Mammary epithelial cell (primary cell): ENCODE measurements at regions of chr17 and their contacts with region 1.

Region 1: GRCh38 chr17:5364156-5364555 is 55.3 kb downstream of the NUP88 start:
- DNase-seq: peak; percentile 48
- H3K4me3 ChIP-seq: no peak overlapping the region
- H3K27ac ChIP-seq: no peak overlapping the region
- H3K4me1 ChIP-seq: peaks cover 25% of the 10 kb centered on the region
- H3K27me3 ChIP-seq: no peaks in the 10 kb centered on the region
- CTCF ChIP-seq: no peak

Region 2: DNA sequence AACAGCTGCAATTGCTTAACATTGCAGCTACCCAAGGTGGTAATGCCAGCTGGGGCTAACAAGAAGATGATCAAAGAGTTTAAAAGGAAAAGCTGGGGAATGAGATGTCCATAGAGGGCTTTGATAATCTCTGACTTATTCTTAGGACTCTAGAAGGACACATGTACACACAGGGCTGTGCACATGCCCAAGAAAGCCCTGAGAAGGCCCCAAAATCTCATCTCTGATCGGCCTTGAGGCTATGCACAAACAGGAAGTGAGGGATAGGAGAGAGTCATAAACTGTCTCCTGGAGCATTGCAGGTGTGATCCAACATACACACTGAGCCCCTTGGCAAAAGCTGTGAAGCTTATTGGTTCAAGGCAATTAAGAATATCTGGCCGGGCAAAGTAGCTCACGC is 99.3 kb before region 1 on chr17:
- CTCF ChIA-PET with region 1: no interaction called
- dilution Hi-C with region 1: loop called (anchors 5 kb)
- in situ Hi-C with region 1: no loop called
- intact Hi-C with region 1: no loop called
- DNase-seq: no peak
- H3K4me3 ChIP-seq: no peak overlapping the region
- H3K27ac ChIP-seq: no peak overlapping the region
- H3K4me1 ChIP-seq: no peaks in the 10 kb centered on the region
- H3K27me3 ChIP-seq: no peaks in the 10 kb centered on the region
- CTCF ChIP-seq: no peak

Region 3: DNA sequence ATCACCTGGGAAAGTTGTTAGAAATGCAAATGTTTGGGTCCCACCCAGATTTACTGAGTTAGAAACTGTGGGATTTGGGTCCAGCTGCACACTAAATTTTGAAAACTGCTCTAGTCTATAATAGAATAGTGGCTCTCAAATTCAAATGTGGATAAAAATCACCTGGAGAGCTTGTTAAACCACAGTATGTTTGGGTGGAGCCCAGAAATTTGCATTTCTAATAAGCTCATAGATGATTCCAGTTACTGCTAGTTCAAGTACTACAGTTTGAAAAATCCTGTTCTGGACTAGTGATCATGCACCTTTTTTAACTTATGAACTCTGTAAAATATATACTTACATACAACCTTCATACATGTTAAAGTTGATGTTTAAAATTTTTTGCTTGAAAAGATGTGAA is 54.3 kb before region 1 on chr17:
- CTCF ChIA-PET with region 1: no interaction called
- dilution Hi-C with region 1: loop called (anchors 5 kb)
- in situ Hi-C with region 1: no loop called
- intact Hi-C with region 1: no loop called
- DNase-seq: no peak
- H3K4me3 ChIP-seq: no peak overlapping the region
- H3K27ac ChIP-seq: no peak overlapping the region
- H3K4me1 ChIP-seq: no peaks in the 10 kb centered on the region
- H3K27me3 ChIP-seq: no peaks in the 10 kb centered on the region
- CTCF ChIP-seq: no peak

Region 4: GRCh38 chr17:5413682-5414081 is 49.5 kb after region 1 on chr17:
- CTCF ChIA-PET with region 1: no interaction called
- dilution Hi-C with region 1: no loop called
- in situ Hi-C with region 1: no loop called
- intact Hi-C with region 1: no loop called
- DNase-seq: peak; percentile 93
- H3K4me3 ChIP-seq: no peak overlapping the region
- H3K27ac ChIP-seq: peak overlapping the region; percentile 61
- H3K4me1 ChIP-seq: peaks cover 20% of the 10 kb centered on the region
- H3K27me3 ChIP-seq: no peaks in the 10 kb centered on the region
- CTCF ChIP-seq: no peak

Region 5: GRCh38 chr17:5486204-5487124 is 122.3 kb after region 1 on chr17 and contains the start of gene MIS12:
- CTCF ChIA-PET with region 1: no interaction called
- dilution Hi-C with region 1: no loop called
- in situ Hi-C with region 1: no loop called
- intact Hi-C with region 1: no loop called
- DNase-seq: peak; percentile 99
- H3K4me3 ChIP-seq: peak within 1 kb of the TSS; percentile 74 to 79 (median 79)
- H3K27ac ChIP-seq: peak within 1 kb of the TSS; percentile 94
- H3K4me1 ChIP-seq: peaks cover 8% of the 10 kb centered on the region
- H3K27me3 ChIP-seq: no peaks in the 10 kb centered on the region
- CTCF ChIP-seq: no peak
- total RNA-seq, gene MIS12: 9.7 to 17.5 TPM